Activated B cell treated with CpG ODN at 0.5 μM for 24 hours (primary cell): ENCODE measurements at regions of chr18 and their contacts with region 1.

Region 1: GRCh38 chr18:79964330-79965118 is at the start of gene HSBP1L1:
- DNase-seq: peak; percentile 56
- ATAC-seq: peak; percentile 83
- H3K4me3 Mint-ChIP-seq: peak within 1 kb of the TSS; percentile 74
- H3K27ac Mint-ChIP-seq: no peak within 1 kb of the TSS
- H3K4me1 Mint-ChIP-seq: peaks cover 37% of the 10 kb centered on the region
- H3K27me3 Mint-ChIP-seq: peaks cover 2% of the 10 kb centered on the region
- CTCF ChIP-seq: no peak
- total RNA-seq, gene HSBP1L1: 0.98 and 2.5 TPM in 2 replicates

Region 2: GRCh38 chr18:79496978-79497637 is 467.4 kb before region 1 on chr18:
- CTCF ChIA-PET with region 1: no interaction called
- POLR2A ChIA-PET with region 1: no interaction called
- intact Hi-C with region 1: no loop called
- DNase-seq: no peak
- ATAC-seq: peak; percentile 79
- H3K4me3 Mint-ChIP-seq: peak overlapping the region; percentile 64
- H3K27ac Mint-ChIP-seq: peak overlapping the region; percentile 80
- H3K4me1 Mint-ChIP-seq: peaks cover 33% of the 10 kb centered on the region
- H3K27me3 Mint-ChIP-seq: no peaks in the 10 kb centered on the region
- CTCF ChIP-seq: no peak

Region 3: GRCh38 chr18:79782566-79783308 is 181.8 kb before region 1 on chr18:
- CTCF ChIA-PET with region 1: no interaction called
- POLR2A ChIA-PET with region 1: no interaction called
- intact Hi-C with region 1: no loop called
- DNase-seq: peak; percentile 11
- ATAC-seq: no peak
- H3K4me3 Mint-ChIP-seq: no peak overlapping the region
- H3K27ac Mint-ChIP-seq: no peak overlapping the region
- H3K4me1 Mint-ChIP-seq: no peaks in the 10 kb centered on the region
- H3K27me3 Mint-ChIP-seq: peaks cover 38% of the 10 kb centered on the region
- CTCF ChIP-seq: no peak

Region 4: DNA sequence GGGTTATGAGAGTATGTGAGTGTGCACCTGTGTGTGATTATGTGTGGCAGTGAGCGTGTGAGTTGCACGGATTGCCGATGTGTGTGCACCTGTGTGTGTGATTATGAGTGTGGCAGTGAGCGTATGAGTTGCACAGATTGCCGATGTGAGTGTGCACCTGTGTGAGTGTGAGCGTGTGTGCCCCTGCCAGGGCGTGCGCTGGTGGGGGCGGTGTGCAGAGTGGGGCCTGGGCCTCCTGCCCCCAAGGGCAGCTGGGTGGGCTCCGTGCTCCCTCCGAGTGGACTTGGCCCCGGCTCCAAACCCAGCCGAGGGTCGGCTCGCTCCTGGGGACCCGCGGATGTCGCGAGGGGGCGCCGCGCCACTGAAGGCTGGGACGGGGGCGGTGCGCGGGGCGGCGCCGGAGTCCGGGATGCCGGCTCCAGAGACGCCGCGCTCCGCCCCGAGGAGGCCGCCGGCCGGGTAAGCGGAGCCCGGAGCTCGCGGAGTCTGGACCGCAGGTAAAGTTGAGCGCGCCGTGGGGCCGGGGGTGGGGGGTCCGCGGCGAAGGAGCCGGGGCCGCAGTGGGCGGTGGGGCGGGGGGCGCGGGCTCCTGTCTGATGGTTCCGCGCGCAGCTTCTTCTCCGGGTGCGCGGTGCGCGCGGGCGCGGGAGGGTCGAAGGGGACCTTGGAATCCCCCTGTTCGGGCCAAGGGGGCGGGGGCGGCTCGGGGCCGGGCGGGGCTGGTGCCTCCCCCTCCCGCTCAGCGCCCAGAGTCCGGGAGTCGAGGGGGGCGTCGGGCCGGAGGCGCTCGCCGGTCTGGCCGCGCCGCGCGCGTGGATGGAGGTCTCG is 166.8 kb before region 1 on chr18 and contains the start of gene KCNG2:
- CTCF ChIA-PET with region 1: no interaction called
- POLR2A ChIA-PET with region 1: no interaction called
- intact Hi-C with region 1: loop called (anchors 5 kb)
- DNase-seq: peak; percentile 32
- ATAC-seq: peak; percentile 66
- H3K4me3 Mint-ChIP-seq: peak within 1 kb of the TSS; percentile 72
- H3K27ac Mint-ChIP-seq: no peak within 1 kb of the TSS
- H3K4me1 Mint-ChIP-seq: peaks cover 22% of the 10 kb centered on the region
- H3K27me3 Mint-ChIP-seq: peaks cover 25% of the 10 kb centered on the region
- CTCF ChIP-seq: no peak
- total RNA-seq, gene KCNG2: not detected in 2 replicates

Region 5: GRCh38 chr18:79912409-79912991 is 52.0 kb before region 1 on chr18:
- CTCF ChIA-PET with region 1: no interaction called
- POLR2A ChIA-PET with region 1: no interaction called
- intact Hi-C with region 1: loop called (anchors 5 kb)
- DNase-seq: peak; percentile 12
- ATAC-seq: peak; percentile 60
- H3K4me3 Mint-ChIP-seq: no peak overlapping the region
- H3K27ac Mint-ChIP-seq: no peak overlapping the region
- H3K4me1 Mint-ChIP-seq: peaks cover 31% of the 10 kb centered on the region
- H3K27me3 Mint-ChIP-seq: no peaks in the 10 kb centered on the region
- CTCF ChIP-seq: no peak

Region 6: DNA sequence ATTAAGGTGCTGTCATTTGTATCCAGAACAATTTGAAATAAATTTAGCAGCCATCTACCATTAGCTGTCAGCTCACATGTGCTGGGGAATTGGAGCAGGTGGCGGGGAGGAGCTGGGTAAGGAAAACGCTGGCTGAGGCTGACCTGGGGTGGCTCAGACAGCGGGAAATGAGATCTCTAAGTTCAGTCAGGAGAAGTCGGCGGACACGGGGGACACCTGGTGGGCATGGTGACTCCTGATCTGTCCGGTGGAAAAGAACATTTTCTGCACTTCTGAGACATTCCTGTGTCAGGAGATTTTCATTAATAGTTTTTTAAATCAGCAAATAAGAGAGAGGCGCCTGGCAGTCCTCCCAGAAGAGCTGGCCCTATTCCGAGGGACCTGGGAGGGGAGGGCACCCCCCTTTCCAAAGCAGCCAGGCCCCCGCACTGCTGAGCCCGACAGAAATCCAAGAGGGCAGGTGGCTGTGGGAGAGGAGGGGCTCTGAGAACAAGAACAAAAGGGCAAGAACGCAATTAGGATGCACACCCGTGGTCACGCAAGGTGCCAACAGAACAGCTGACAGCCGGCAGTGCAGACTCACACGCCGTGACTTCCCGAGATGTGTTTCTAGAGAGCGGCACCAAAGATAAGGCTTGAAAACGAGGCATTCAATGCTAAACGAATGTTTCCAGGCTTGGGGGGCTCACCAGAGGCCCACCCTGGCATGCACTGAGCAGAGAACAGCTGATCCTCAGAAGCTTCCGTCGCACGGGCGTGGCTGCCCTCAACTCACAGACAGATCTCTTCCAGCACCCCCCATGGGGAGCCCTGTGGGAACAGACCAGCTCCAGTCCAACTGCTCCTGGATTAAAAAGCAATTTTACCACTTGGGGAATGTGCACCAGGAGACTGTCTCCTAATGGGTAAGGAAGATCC is 39.5 kb before region 1 on chr18:
- CTCF ChIA-PET with region 1: no interaction called
- POLR2A ChIA-PET with region 1: interaction called, 10 read pairs
- intact Hi-C with region 1: no loop called
- DNase-seq: no peak
- ATAC-seq: no peak
- H3K4me3 Mint-ChIP-seq: no peak overlapping the region
- H3K27ac Mint-ChIP-seq: no peak overlapping the region
- H3K4me1 Mint-ChIP-seq: no peaks in the 10 kb centered on the region
- H3K27me3 Mint-ChIP-seq: no peaks in the 10 kb centered on the region
- CTCF ChIP-seq: no peak